Activated naive CD4-positive, alpha-beta T cell treated with anti-CD3 and anti-CD28 coated beads for 36 hours (primary cell): ENCODE measurements at regions of chr5 and their contacts with region 1.

Region 1: GRCh38 chr5:14415024-14415697 is 166.4 kb upstream of the OTULINL start:
- DNase-seq: peak; percentile 43
- H3K4me3 Mint-ChIP-seq: peak overlapping the region; percentile 51
- H3K27ac Mint-ChIP-seq: peak overlapping the region; percentile 84
- H3K4me1 Mint-ChIP-seq: peaks cover 50% of the 10 kb centered on the region
- H3K27me3 Mint-ChIP-seq: peaks cover 2% of the 10 kb centered on the region

Region 2: GRCh38 chr5:14142827-14143548 is 272.2 kb before region 1 on chr5 and contains the start of gene TRIO:
- CTCF ChIA-PET with region 1: no interaction called
- intact Hi-C with region 1: loop called (anchors 5 kb)
- DNase-seq: peak; percentile 79
- H3K4me3 Mint-ChIP-seq: peak within 1 kb of the TSS; percentile 78
- H3K27ac Mint-ChIP-seq: no peak within 1 kb of the TSS
- H3K4me1 Mint-ChIP-seq: peaks cover 11% of the 10 kb centered on the region
- H3K27me3 Mint-ChIP-seq: peaks cover 54% of the 10 kb centered on the region
- total RNA-seq, gene TRIO: 3.6 to 4.6 TPM

Region 3: GRCh38 chr5:14153932-14154731 is 261.0 kb before region 1 on chr5:
- CTCF ChIA-PET with region 1: no interaction called
- intact Hi-C with region 1: no loop called
- DNase-seq: no peak
- H3K4me3 Mint-ChIP-seq: no peak overlapping the region
- H3K27ac Mint-ChIP-seq: no peak overlapping the region
- H3K4me1 Mint-ChIP-seq: no peaks in the 10 kb centered on the region
- H3K27me3 Mint-ChIP-seq: peaks cover 19% of the 10 kb centered on the region

Region 4: DNA sequence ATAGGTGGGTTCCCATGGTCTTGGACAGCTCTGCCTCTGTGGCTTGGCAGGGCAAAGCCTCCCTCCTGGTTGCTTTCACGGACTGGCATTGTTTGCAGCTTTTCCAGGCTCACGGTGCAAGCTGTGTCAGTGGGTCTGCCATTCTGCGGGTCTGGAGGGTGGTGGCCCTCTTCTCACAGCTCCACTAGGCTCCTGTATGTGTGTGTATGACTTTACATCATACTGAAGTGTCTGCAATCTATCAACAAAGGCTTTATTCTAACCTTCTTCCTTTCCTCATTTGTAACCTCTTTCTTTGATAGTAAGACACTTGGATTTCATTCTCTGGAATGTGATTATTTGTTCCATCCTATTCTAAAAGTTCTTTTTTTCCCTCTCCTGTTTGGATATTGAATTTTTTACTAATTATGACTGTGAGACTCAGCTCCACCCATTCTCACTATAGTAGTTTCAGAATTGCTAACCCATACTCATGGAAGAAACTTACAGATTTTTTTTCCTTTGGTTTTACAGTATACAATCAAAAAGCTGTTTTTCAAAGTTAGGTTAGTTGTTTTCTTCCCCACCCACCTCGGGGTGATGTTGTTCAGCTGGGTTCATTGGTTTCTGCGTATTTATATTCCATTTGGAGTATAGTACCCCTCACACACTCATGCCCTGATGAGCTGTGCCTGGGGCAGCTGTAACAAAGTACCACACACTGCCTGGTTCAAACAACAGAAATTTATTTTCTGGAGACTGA is 21.8 kb after region 1 on chr5:
- CTCF ChIA-PET with region 1: interaction called, 4 read pairs
- intact Hi-C with region 1: loop called (anchors 1 kb)
- DNase-seq: no peak
- H3K4me3 Mint-ChIP-seq: no peak overlapping the region
- H3K27ac Mint-ChIP-seq: peak overlapping the region; percentile 75
- H3K4me1 Mint-ChIP-seq: peaks cover 30% of the 10 kb centered on the region
- H3K27me3 Mint-ChIP-seq: no peaks in the 10 kb centered on the region

Region 5: DNA sequence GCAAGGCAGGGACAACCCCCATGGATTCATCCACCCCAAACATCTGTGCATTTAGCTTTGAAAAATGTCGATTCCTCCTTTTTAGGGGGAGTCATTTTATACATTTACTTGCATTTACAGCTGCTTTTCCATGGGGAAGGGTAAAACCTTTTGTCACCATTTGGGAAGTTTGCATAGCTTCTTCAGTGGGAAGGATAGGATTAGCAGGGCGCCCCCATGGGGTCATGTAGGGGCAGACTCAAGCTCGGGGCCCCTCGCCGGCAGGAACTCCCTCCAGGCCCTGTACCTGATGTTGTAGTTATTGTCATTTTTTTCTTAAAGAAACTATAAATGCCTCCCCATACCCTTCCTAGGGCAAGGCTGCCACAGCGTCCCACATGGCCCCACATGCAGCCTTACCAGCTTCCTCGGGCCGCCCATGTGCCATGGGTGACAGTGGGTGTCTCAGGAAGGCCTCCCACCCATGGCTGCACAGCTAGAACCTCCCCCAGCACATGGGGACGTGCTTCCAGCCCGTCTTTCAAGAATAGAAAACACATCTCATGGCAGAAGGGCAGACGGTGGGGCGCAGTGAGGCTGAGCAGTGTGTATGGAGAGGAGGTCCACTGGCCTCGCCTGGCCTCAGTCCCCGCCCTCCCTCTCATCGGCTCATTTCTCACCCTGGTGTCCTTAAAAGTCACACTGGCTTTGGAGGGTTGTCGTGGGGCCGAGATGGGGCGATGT is 90.3 kb after region 1 on chr5:
- CTCF ChIA-PET with region 1: no interaction called
- intact Hi-C with region 1: no loop called
- DNase-seq: no peak
- H3K4me3 Mint-ChIP-seq: no peak overlapping the region
- H3K27ac Mint-ChIP-seq: no peak overlapping the region
- H3K4me1 Mint-ChIP-seq: no peaks in the 10 kb centered on the region
- H3K27me3 Mint-ChIP-seq: no peaks in the 10 kb centered on the region

Region 6: DNA sequence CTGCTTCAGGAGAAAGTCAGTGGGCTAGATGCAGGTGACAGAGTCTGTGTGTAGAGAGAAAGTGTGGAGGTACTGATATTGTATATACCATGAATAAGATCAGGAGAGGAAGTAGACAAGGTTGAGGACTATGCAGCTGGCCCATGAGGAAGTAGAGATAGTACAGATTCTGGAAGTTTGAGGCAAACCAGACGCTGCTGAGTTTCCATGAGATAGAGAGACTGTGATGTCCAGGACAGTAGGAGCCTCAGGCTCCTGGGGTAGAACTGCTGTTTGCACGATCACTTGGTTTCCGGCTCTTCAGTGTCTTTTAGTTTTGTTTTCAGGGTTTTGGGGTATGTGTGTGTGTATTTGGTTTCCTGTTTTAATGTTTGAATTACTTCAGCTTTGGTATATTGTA is 180.0 kb after region 1 on chr5:
- CTCF ChIA-PET with region 1: interaction called, 7 read pairs
- intact Hi-C with region 1: loop called (anchors 1 kb)
- DNase-seq: peak; percentile 51
- H3K4me3 Mint-ChIP-seq: peak overlapping the region; percentile 68
- H3K27ac Mint-ChIP-seq: peak overlapping the region; percentile 90
- H3K4me1 Mint-ChIP-seq: peaks cover 84% of the 10 kb centered on the region
- H3K27me3 Mint-ChIP-seq: no peaks in the 10 kb centered on the region

Region 7: GRCh38 chr5:14925326-14925725 is 510.2 kb after region 1 on chr5:
- CTCF ChIA-PET with region 1: no interaction called
- intact Hi-C with region 1: loop called (anchors 2 kb)
- DNase-seq: no peak
- H3K4me3 Mint-ChIP-seq: peak overlapping the region; percentile 40
- H3K27ac Mint-ChIP-seq: peak overlapping the region; percentile 86
- H3K4me1 Mint-ChIP-seq: peaks cover 58% of the 10 kb centered on the region
- H3K27me3 Mint-ChIP-seq: no peaks in the 10 kb centered on the region